Sigmoid colon (tissue), 7 donors: ENCODE measurements at regions of chr1 and their contacts with region 1.

Region 1: DNA sequence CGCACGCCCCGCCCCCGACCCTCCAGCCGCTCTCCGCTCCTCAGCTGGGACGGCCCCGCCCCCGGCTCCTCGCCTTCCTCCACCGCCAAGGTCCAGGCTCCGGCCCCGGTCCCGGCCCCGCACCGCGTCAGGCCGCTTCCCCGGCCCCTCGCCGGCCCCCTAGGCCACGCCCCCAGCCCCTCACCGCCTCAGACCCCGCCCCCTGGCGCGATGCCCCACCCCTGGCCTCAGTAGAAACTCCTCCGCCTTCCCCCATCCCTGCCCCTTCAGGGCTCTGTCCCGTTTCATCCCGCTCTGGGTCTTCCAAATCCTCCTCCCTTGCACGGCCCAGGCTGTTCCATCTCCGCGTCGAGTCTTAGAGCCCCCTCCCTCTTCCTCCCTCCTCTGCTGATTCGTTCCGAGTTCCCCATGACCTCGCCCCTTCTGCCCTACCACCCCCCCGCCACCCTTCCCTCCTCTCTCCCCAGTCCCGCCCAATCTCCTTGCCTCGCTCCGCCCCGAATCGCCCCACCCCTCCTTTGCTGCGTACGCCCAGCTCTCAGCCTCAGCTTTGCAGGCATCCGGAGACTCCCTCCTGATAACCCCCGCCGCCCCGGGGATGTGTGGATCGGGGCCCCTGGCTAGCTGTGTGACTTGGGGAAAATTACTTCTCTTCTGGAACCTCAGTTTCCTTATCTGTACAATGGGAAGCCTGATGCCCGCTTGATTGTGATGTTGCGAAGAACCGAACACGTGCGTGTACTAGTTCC is 448 bp upstream of the ASAP3 start:
- DNase-seq: peak; percentile 97
- H3K4me3 ChIP-seq: peak overlapping the region; percentile 67 to 98 (median 94)
- H3K27ac ChIP-seq: peak overlapping the region; percentile 88 to 98 (median 94)
- H3K4me1 ChIP-seq: peaks cover 0 to 29% (median 17%) of the 10 kb centered on the region in 4 donors
- H3K27me3 ChIP-seq: no peaks in the 10 kb centered on the region
- CTCF ChIP-seq: no peak
- EP300 ChIP-seq: no peak
- POLR2A ChIP-seq: no peak

Region 2: DNA sequence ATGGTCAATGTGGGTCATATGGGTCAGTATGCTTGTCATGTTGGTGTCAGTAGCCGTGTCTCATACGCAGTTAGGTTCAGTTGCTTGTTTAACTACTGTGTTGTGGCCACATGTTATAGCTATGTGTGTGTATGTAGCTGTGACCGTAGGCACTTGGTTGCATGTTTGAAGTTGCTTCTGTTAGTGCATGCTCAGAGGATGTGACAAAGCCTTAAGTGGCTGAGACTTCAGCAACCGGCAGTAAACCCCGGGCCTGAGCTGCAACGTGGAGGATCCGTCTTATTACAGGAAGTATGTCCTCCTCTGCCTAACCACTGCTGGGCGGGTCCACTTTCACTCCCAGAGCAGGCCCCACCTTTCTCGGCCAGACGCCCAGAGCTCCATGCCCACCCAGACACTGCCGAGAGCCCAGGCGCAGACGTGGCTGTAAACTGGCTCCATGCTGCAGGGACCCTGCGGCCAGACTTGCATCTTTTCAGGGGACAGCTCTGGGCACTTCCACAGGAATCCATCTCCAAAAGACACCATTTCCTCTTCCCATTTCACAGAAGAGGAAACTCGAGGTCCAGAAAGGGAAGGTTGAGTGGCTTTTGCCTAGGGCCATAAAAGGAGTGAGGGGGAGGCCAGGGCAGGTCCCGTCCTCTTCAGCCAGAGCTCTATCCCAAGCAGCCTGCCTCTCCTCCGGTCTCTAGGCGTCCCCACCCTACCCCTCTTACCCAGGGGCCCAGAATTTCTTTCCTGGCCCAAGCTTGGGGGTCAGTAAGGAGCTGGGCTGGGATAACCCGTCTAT is 62.0 kb before region 1 on chr1:
- intact Hi-C with region 1: loop called (anchors 2 kb)
- DNase-seq: peak; percentile 90
- H3K4me3 ChIP-seq: peak overlapping the region in 3 of 4 donors; percentile 18 to 75 (median 25)
- H3K27ac ChIP-seq: peak overlapping the region; percentile 81 to 89 (median 87)
- H3K4me1 ChIP-seq: peaks cover 0 to 50% (median 38%) of the 10 kb centered on the region in 4 donors
- H3K27me3 ChIP-seq: no peaks in the 10 kb centered on the region
- CTCF ChIP-seq: no peak
- EP300 ChIP-seq: no peak
- POLR2A ChIP-seq: peak in 1 of 2 donors; percentile 18

Region 3: GRCh38 chr1:23530747-23531561 is 46.5 kb after region 1 on chr1 and contains the start of gene E2F2:
- intact Hi-C with region 1: loop called (anchors 5 kb)
- DNase-seq: peak; percentile 95
- H3K4me3 ChIP-seq: peak within 1 kb of the TSS; percentile 22 to 58 (median 52)
- H3K27ac ChIP-seq: peak within 1 kb of the TSS; percentile 61 to 65 (median 62)
- H3K4me1 ChIP-seq: peaks cover 0 to 23% (median 19%) of the 10 kb centered on the region in 4 donors
- H3K27me3 ChIP-seq: peaks cover 7 to 38% (median 17%) of the 10 kb centered on the region in 3 donors
- CTCF ChIP-seq: no peak
- EP300 ChIP-seq: no peak
- POLR2A ChIP-seq: no peak
- total RNA-seq, gene E2F2: 0.14 to 0.28 TPM in 2 of 4 donors, not detected in the others

Region 4: DNA sequence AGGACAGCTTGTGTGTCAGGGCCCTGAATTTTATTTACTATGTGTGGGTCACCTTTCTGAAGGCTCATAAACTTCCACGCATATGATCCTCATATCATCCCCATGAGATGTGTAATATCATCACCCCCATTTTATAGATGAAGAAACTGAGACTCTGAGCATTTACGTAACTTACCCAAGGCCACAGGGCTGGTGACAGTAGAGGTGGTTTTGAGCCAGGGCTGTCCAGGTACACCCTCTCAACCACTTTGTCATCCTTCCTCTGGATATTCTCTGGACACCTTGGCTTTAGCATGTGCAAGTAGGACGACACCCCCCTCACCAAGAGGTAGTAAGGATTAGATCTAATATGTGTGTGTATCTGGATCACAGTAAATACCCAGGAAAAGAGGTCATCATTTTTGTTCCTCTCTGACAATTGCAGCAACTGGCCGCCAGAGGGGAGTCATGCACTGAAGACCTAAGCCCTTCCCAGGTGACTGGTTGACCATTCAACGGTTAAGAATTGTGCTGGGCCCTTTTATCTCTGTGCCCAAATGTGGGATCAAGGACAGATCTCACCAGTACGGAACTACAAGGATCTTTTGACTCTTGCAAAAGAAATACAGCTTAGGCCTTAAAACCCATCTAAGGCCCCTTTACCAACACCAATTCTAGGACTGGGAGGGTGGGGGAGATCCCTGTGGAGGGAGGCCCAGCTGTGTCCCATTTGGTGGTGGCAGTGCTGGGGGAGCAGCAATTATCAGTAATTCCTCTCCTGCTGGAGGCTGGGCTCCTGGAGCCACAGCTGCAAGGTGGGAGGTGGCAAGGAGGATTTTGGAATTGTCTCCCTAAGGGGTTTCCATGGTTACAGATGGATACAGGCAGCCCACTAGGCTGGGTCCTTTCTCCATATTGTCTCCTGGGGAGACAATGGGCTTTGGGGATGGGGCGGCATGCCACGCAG is 60.3 kb after region 1 on chr1:
- intact Hi-C with region 1: no loop called
- DNase-seq: peak; percentile 89
- H3K4me3 ChIP-seq: no peak overlapping the region
- H3K27ac ChIP-seq: no peak overlapping the region
- H3K4me1 ChIP-seq: peaks cover 0 to 9% (median 4%) of the 10 kb centered on the region in 4 donors
- H3K27me3 ChIP-seq: no peaks in the 10 kb centered on the region
- CTCF ChIP-seq: peak; percentile 87 to 99 (median 94)
- EP300 ChIP-seq: no peak
- POLR2A ChIP-seq: no peak